CD4-positive, alpha-beta T cell (primary cell): ENCODE measurements at regions of chr9 and their contacts with region 1.

Region 1: DNA sequence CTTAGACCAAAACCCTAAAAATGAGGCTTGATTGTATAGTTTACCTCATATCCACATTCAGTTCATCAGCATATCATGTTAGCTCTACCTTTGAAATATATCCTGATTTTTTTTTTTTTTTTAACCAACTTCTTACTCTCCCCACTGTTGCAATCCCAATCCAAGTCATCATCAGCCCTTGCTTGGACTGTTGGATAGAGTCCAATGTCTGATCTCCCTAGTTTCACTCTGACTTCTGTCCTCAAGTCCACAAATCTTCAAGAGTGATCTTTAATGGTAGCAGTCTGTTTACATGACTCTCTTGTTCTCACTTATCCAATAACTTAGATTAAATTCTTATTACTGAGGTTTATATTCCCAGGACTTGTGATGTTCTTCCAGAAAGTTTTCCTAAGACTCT is 30.8 kb downstream of the NAA35 start:
- DNase-seq: no peak
- ATAC-seq: no peak
- H3K4me3 ChIP-seq: no peak overlapping the region
- H3K4me3 Mint-ChIP-seq: no peak overlapping the region
- H3K27ac ChIP-seq: no peak overlapping the region
- H3K27ac Mint-ChIP-seq: no peak overlapping the region
- H3K4me1 ChIP-seq: no peaks in the 10 kb centered on the region
- H3K4me1 Mint-ChIP-seq: no peaks in the 10 kb centered on the region
- H3K27me3 ChIP-seq: no peaks in the 10 kb centered on the region
- H3K27me3 Mint-ChIP-seq: no peaks in the 10 kb centered on the region
- CTCF ChIP-seq: no peak

Region 2: GRCh38 chr9:85927076-85927475 is 44.7 kb before region 1 on chr9:
- CTCF ChIA-PET with region 1: no interaction called
- POLR2A ChIA-PET with region 1: no interaction called
- intact Hi-C with region 1: no loop called
- DNase-seq: no peak
- ATAC-seq: no peak
- H3K4me3 ChIP-seq: no peak overlapping the region
- H3K4me3 Mint-ChIP-seq: no peak overlapping the region
- H3K27ac ChIP-seq: no peak overlapping the region
- H3K27ac Mint-ChIP-seq: no peak overlapping the region
- H3K4me1 ChIP-seq: no peaks in the 10 kb centered on the region
- H3K4me1 Mint-ChIP-seq: no peaks in the 10 kb centered on the region
- H3K27me3 ChIP-seq: peaks cover 0 to 7% of the 10 kb centered on the region in 2 experiments
- H3K27me3 Mint-ChIP-seq: peaks cover 23% of the 10 kb centered on the region
- CTCF ChIP-seq: no peak

Region 3: GRCh38 chr9:85949586-85950335 is 22.0 kb before region 1 on chr9:
- CTCF ChIA-PET with region 1: no interaction called
- POLR2A ChIA-PET with region 1: no interaction called
- intact Hi-C with region 1: loop called in 1 of 2 experiments (anchors 2 kb)
- DNase-seq: no peak
- ATAC-seq: no peak
- H3K4me3 ChIP-seq: no peak overlapping the region
- H3K4me3 Mint-ChIP-seq: no peak overlapping the region
- H3K27ac ChIP-seq: no peak overlapping the region
- H3K27ac Mint-ChIP-seq: no peak overlapping the region
- H3K4me1 ChIP-seq: no peaks in the 10 kb centered on the region
- H3K4me1 Mint-ChIP-seq: peaks cover 36% of the 10 kb centered on the region
- H3K27me3 ChIP-seq: no peaks in the 10 kb centered on the region
- H3K27me3 Mint-ChIP-seq: no peaks in the 10 kb centered on the region
- CTCF ChIP-seq: no peak